IMR-90 (cell line): ENCODE measurements at regions of chr20 and their contacts with region 1.

Region 1: GRCh38 chr20:36848078-36848660 is 27.8 kb upstream of the TLDC2 start:
- DNase-seq: peak; percentile 97
- ATAC-seq: peak; percentile 92
- H3K4me3 ChIP-seq: no peak overlapping the region
- H3K27ac ChIP-seq: peak overlapping the region; percentile 97
- H3K4me1 ChIP-seq: peaks cover 28% of the 10 kb centered on the region
- H3K27me3 ChIP-seq: no peaks in the 10 kb centered on the region
- CTCF ChIP-seq: no peak
- POLR2A ChIP-seq: no peak
- RAD21 ChIP-seq: no peak; the same call in 1 of the 2 replicates

Region 2: DNA sequence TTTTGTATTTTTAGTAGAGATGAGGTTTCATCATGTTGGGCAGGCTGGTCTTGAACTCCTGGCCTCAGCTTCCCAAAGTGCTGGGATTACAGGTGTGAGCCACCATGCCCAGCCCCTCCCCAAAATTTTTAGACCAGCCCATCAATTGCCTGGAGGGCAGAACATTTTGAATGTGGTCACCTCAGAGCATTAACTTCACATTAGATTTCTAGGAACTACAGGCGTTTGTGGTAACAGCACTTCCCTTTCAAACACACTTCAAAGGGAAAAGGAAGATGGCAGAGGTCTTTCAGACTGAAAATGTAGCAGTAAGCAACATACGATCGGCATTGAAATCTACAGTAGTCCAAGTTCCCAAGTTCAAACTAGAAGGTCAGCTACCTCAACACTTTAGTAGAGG is 189.9 kb before region 1 on chr20:
- CTCF ChIA-PET with region 1: no interaction called
- POLR2A ChIA-PET with region 1: no interaction called
- dilution Hi-C with region 1: no loop called
- in situ Hi-C with region 1: no loop called
- intact Hi-C with region 1: no loop called
- DNase-seq: no peak
- ATAC-seq: no peak
- H3K4me3 ChIP-seq: no peak overlapping the region
- H3K27ac ChIP-seq: no peak overlapping the region
- H3K4me1 ChIP-seq: no peaks in the 10 kb centered on the region
- H3K27me3 ChIP-seq: no peaks in the 10 kb centered on the region
- CTCF ChIP-seq: no peak
- POLR2A ChIP-seq: no peak
- RAD21 ChIP-seq: no peak

Region 3: DNA sequence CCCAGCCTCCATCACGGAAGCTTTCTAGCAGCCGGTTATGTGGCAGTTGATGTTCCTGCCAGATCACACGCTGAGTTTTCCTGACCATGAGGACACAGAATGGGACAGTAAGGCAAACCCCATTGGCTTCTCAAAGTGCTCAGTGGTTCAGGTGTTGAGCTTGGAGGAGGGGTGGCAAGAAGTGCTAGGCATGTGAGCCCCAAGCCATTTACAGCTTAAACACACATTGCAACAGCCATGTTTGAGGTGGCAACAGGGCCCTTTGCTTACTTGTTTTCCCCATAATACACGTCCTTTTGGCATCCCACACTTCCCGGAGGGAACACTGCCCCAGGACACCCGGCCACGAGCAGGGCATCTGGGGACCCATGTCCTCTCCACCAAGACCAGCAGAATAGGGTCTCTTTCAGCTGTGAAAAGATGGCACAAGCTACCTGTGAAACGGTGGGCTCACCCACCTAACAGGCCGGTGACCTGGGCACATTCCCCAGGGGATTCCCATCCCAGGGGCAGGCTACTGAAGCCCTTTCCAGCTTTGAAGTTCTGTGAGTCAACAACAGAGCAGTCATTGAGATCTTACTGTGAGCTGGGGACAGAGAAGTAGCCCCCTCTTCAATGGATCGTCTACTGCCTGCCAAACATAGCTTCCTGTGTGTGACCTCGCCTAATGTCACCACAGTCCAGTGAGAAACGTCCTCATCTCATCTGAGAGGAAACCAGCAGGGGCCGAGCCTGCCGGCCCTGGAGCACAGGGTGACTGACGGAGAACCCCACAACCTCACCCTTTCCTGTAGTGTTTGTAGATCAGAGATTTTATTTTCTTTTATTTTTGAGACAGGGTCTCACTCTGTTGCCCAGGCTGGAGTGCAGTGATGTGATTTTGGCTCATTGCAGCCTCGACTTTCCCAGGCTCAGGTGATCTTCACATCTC is 23.7 kb after region 1 on chr20:
- CTCF ChIA-PET with region 1: no interaction called
- POLR2A ChIA-PET with region 1: interaction called, 11 read pairs
- dilution Hi-C with region 1: no loop called
- in situ Hi-C with region 1: no loop called
- intact Hi-C with region 1: no loop called
- DNase-seq: no peak
- ATAC-seq: no peak
- H3K4me3 ChIP-seq: no peak overlapping the region
- H3K27ac ChIP-seq: no peak overlapping the region
- H3K4me1 ChIP-seq: no peaks in the 10 kb centered on the region
- H3K27me3 ChIP-seq: no peaks in the 10 kb centered on the region; the same call in 1 of the 2 replicates
- CTCF ChIP-seq: no peak
- POLR2A ChIP-seq: no peak
- RAD21 ChIP-seq: no peak